ENCODE measurements at regions of chr6 and their contacts with region 1.

Region 1: DNA sequence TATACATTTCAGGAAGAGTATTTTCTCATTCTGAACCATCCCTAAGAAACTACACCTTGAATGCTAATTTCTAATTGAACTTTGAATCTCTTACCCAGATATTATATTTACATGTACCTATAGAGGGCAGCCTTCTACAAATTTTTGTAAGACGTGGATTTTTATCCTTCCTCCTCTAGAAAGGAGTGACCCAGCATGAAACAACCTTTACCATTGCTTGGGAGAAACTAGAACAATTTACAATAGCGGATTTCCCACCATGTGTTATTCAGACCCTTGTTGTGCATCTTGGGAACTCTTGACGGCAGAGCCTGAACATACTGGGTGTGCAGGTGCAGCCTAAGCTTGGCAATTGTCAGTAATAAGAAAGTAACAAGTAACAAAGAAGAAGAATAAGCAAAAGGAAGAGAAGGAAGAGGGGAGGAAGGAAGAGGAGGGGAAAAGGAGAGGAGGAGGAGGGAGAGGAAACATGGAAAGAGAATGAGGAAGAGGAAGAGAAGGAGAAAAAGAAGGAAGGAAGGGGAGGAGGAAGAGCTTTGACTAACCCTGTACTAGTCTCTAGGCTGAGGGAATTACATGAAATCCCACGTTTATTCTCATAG is 10.8 kb upstream of the TAAR1 start:
- DNase-seq: peak in 3 of 14 experiments; percentile 41 to 48 (median 42)
- ATAC-seq: peak; percentile 37
- H3K4me3 ChIP-seq: no peak overlapping the region
- H3K4me3 Mint-ChIP-seq: no peak overlapping the region
- H3K27ac ChIP-seq: no peak overlapping the region
- H3K27ac Mint-ChIP-seq: no peak overlapping the region
- H3K4me1 ChIP-seq: peaks cover 3% of the 10 kb centered on the region
- H3K4me1 Mint-ChIP-seq: no peaks in the 10 kb centered on the region
- H3K27me3 ChIP-seq: no peaks in the 10 kb centered on the region
- H3K27me3 Mint-ChIP-seq: peaks cover 11% of the 10 kb centered on the region
- CTCF ChIP-seq: peak; percentile 76

Region 2: DNA sequence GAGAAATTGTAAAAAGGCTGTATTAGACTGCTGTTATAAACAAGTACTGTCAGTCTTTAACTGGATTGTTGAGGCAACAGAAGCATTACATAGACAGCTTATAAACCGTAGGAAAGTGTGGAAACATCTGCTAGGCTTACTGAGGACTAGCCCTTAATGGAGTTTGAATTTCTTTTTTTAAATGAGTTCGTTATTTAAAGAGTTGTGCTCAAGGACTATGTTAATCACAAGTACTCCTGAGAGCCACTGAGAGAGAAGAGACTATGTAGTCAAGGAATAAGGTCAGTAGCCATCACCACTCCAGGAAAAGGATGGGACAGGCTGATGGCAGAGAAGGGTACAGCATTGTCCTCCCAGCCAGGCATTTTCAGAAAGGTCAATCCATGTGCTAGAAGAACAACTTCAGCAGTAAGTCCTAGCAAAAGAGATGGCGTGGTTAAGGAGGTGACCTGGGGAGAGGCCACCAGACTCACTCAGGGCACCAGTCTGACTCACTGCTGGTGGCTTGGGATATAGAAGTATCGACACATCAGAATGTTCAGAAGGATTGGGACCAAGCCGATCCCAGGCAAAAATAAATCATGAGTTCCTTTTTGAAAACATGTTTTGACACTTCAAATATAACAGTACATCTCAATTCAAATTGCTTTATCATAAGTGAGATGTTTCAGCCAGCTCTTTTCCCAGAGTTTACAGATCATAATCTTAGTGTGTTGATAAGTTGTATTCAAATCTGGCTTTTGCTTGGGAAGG is 151.0 kb after region 1 on chr6:
- CTCF ChIA-PET with region 1: no interaction called
- POLR2A ChIA-PET with region 1: interaction called, 4 read pairs
- intact Hi-C with region 1: loop called in 1 of 2 experiments (anchors 10 kb)
- DNase-seq: no peak
- ATAC-seq: no peak
- H3K4me3 ChIP-seq: no peak overlapping the region
- H3K4me3 Mint-ChIP-seq: no peak overlapping the region
- H3K27ac ChIP-seq: no peak overlapping the region
- H3K27ac Mint-ChIP-seq: peak overlapping the region; percentile 52
- H3K4me1 ChIP-seq: peaks cover 18% of the 10 kb centered on the region
- H3K4me1 Mint-ChIP-seq: peaks cover 63% of the 10 kb centered on the region
- H3K27me3 ChIP-seq: no peaks in the 10 kb centered on the region
- H3K27me3 Mint-ChIP-seq: no peaks in the 10 kb centered on the region
- CTCF ChIP-seq: no peak

Region 3: GRCh38 chr6:133040094-133040802 is 370.5 kb after region 1 on chr6:
- CTCF ChIA-PET with region 1: no interaction called
- POLR2A ChIA-PET with region 1: no interaction called
- intact Hi-C with region 1: loop called in 1 of 2 experiments (anchors 10 kb)
- DNase-seq: peak in 2 of 14 experiments; percentile 4 to 9
- ATAC-seq: no peak
- H3K4me3 ChIP-seq: no peak overlapping the region
- H3K4me3 Mint-ChIP-seq: no peak overlapping the region
- H3K27ac ChIP-seq: no peak overlapping the region
- H3K27ac Mint-ChIP-seq: no peak overlapping the region
- H3K4me1 ChIP-seq: no peaks in the 10 kb centered on the region
- H3K4me1 Mint-ChIP-seq: no peaks in the 10 kb centered on the region
- H3K27me3 ChIP-seq: peaks cover 0 to 2% of the 10 kb centered on the region in 2 experiments
- H3K27me3 Mint-ChIP-seq: peaks cover 4% of the 10 kb centered on the region
- CTCF ChIP-seq: no peak

Region 4: DNA sequence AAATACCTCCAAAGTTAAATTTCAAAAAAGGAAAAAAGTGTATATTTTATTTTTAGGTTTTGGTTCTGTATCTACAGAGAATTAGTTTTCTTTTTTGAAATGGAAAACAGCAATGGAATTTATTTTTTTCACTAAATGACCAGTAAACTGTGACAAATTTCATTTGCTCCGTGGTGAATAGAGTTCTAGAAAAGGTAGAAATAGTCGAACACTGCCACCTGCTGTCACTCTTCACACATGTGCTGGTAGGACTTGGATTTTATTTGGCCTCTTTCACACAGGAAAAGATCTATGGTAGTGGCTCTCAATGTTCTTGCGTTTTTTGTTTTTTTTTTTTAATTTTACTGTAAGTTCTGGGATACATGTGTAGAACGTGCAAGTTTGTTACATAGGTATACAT is 883.9 kb after region 1 on chr6:
- CTCF ChIA-PET with region 1: no interaction called
- POLR2A ChIA-PET with region 1: no interaction called
- intact Hi-C with region 1: loop called in 1 of 2 experiments (anchors 5 kb)
- DNase-seq: peak in 5 of 14 experiments; percentile 3 to 50 (median 39)
- ATAC-seq: no peak
- H3K4me3 ChIP-seq: no peak overlapping the region
- H3K4me3 Mint-ChIP-seq: no peak overlapping the region
- H3K27ac ChIP-seq: no peak overlapping the region
- H3K27ac Mint-ChIP-seq: no peak overlapping the region
- H3K4me1 ChIP-seq: no peaks in the 10 kb centered on the region
- H3K4me1 Mint-ChIP-seq: no peaks in the 10 kb centered on the region
- H3K27me3 ChIP-seq: peaks cover 0 to 3% of the 10 kb centered on the region in 2 experiments
- H3K27me3 Mint-ChIP-seq: peaks cover 8% of the 10 kb centered on the region
- CTCF ChIP-seq: peak; percentile 44

Measured in CD4-positive, alpha-beta T cell (primary cell).